ENCODE measurements at regions of chr1 and their contacts with region 1.

Region 1: GRCh38 chr1:65419681-65420589 is 533 bp upstream of the LEPR start:
- DNase-seq: peak; percentile 99
- ATAC-seq: peak; percentile 96
- H3K4me3 Mint-ChIP-seq: no peak overlapping the region
- H3K27ac Mint-ChIP-seq: peak overlapping the region; percentile 94
- H3K4me1 Mint-ChIP-seq: peaks cover 13% of the 10 kb centered on the region
- H3K27me3 Mint-ChIP-seq: no peaks in the 10 kb centered on the region

Region 2: DNA sequence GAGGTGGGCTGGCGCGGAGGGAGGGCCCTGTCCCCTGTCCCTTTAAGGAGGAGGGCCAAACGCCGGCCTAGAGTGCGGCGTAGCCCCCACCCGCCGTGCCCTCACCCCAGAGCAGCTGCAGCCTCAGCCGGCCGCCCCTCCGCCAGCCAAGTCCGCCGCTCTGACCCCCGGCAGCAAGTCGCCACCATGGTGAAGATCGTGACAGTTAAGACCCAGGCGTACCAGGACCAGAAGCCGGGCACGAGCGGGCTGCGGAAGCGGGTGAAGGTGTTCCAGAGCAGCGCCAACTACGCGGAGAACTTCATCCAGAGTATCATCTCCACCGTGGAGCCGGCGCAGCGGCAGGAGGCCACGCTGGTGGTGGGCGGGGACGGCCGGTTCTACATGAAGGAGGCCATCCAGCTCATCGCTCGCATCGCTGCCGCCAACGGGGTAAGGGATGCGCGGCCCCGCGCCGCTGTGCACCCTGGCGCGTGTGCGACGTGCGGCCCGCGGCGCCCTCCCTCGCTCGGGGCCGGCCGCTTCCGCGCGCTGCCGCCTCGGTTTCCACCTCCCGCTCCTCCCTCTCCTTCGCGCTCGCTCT is 1826.5 kb before region 1 on chr1 and contains the start of gene PGM1:
- CTCF ChIA-PET with region 1: no interaction called
- POLR2A ChIA-PET with region 1: no interaction called
- intact Hi-C with region 1: loop called in 1 of 2 experiments (anchors 5 kb)
- DNase-seq: peak; percentile 89
- ATAC-seq: peak; percentile 85
- H3K4me3 Mint-ChIP-seq: peak within 1 kb of the TSS; percentile 97
- H3K27ac Mint-ChIP-seq: peak within 1 kb of the TSS; percentile 96
- H3K4me1 Mint-ChIP-seq: peaks cover 27% of the 10 kb centered on the region
- H3K27me3 Mint-ChIP-seq: no peaks in the 10 kb centered on the region
- total RNA-seq, gene PGM1: 38.8 to 43.8 TPM

Region 3: DNA sequence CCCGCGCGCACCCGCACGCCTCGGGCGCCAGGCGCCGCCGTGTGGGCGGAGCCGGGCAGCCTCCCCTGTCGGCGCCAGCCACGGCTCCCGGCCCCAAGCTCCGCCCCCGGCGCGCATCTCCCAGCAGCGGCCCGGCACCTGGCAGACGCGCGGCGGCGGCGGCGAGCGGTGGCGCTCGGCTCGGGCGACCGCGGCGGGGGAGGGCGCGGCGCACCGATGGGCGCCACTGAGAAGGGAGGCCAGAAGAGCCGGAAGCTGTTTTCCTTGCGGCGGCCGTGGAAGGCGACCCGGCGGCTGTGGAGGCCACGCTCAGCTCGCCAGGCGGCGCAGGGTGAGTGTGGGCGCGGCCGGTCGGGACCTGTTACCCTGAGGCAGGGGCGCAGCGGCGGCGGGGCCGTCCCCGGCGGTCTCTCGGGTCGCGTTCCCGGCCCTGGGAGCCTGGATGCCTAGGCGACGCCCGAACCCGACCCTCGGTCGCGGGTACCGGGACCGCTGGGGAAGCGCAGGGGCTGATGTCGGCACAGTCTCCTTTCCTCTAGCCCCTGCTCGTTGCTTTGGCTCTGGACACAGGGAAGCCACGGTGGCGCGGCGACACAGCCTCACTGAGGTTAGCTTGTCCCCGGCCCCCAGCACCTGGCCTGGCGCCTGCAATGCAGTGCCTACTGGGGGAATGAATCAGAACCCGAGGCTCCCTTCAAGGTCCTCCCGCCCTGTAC is 165.5 kb before region 1 on chr1:
- CTCF ChIA-PET with region 1: interaction called, 3 read pairs
- POLR2A ChIA-PET with region 1: interaction called, 3 read pairs
- intact Hi-C with region 1: loop called (anchors 1 to 2 kb)
- DNase-seq: peak; percentile 93
- ATAC-seq: peak; percentile 96
- H3K4me3 Mint-ChIP-seq: peak overlapping the region; percentile 71
- H3K27ac Mint-ChIP-seq: peak overlapping the region; percentile 39
- H3K4me1 Mint-ChIP-seq: peaks cover 16% of the 10 kb centered on the region
- H3K27me3 Mint-ChIP-seq: peaks cover 16% of the 10 kb centered on the region

Region 4: GRCh38 chr1:65265651-65266351 is 154.1 kb before region 1 on chr1:
- CTCF ChIA-PET with region 1: no interaction called
- POLR2A ChIA-PET with region 1: no interaction called
- intact Hi-C with region 1: loop called in 1 of 2 experiments (anchors 1 kb)
- DNase-seq: peak; percentile 49
- ATAC-seq: peak; percentile 31
- H3K4me3 Mint-ChIP-seq: peak overlapping the region; percentile 55
- H3K27ac Mint-ChIP-seq: peak overlapping the region; percentile 51
- H3K4me1 Mint-ChIP-seq: peaks cover 23% of the 10 kb centered on the region
- H3K27me3 Mint-ChIP-seq: peaks cover 27% of the 10 kb centered on the region

Region 5: DNA sequence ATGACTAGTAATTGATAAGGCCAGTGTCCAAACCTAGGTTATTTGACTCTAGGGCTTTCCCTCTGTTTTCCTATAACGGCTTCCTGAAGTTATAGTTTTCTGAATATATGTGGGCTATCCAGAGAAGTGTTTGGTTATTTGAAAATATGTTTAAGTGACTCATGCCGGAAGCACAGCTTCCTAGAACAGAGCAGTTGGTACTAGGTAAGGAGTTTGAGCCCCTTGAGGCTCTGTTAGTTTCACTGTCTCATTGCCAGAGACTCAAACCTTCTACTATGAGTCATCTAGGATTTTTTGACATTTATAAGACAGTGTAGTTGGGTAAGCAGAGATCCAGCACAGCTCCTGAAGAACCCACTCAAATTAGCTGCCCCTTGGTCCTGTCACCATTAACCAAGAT is 26.6 kb before region 1 on chr1:
- CTCF ChIA-PET with region 1: no interaction called
- POLR2A ChIA-PET with region 1: no interaction called
- intact Hi-C with region 1: loop called (anchors 1 kb)
- DNase-seq: peak; percentile 45
- ATAC-seq: peak; percentile 87
- H3K4me3 Mint-ChIP-seq: no peak overlapping the region
- H3K27ac Mint-ChIP-seq: peak overlapping the region; percentile 28
- H3K4me1 Mint-ChIP-seq: peaks cover 57% of the 10 kb centered on the region
- H3K27me3 Mint-ChIP-seq: no peaks in the 10 kb centered on the region

Region 6: DNA sequence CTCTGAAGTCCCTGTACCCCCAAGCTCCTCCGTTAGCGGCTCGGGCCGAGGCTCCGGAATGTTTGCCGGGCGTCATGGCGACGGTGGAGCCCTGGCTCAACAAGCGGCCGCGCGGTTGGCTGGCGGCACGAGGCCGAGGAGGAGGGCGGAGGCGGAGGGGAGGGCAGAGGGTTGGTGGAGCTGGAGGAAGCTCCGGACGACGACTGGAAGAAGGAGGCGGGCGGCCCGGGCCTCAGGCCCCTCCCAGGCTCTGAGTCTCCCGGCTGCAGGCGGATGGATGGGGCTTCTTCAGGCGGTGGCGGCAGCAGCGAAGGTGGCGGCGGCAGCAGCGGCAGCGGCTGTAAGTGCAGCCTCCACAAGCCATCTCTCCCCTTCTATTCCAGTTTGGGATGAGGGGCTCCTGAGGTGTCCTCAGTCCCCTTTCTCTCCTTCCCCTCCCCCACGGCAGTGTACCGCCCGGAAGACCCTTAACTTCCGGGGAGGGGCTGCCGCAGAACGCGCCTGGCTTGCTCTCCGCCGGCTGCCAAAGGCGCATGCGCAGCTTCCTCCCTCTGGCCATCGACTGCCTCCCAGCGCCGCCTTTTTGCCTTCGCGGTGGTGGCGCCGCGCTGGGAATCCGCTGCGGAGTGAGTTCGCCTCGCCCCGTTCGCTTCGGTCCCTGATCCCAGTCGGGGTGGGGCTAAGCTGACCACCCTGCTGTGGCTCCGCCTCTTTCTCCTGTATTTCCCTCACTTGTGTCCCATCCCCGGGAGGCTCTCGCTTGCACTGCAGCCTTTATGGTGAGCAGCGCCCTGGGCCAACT is 1505.0 kb after region 1 on chr1 and contains the starts of genes DNAI4 and MIER1:
- CTCF ChIA-PET with region 1: no interaction called
- POLR2A ChIA-PET with region 1: no interaction called
- intact Hi-C with region 1: loop called in 1 of 2 experiments (anchors 2 kb)
- DNase-seq: peak; percentile 99
- ATAC-seq: peak; percentile 94
- H3K4me3 Mint-ChIP-seq: peak within 1 kb of the TSS; percentile 93
- H3K27ac Mint-ChIP-seq: peak within 1 kb of the TSS; percentile 92
- H3K4me1 Mint-ChIP-seq: peaks cover 52% of the 10 kb centered on the region
- H3K27me3 Mint-ChIP-seq: no peaks in the 10 kb centered on the region
- total RNA-seq, gene DNAI4: 0.87 to 3.6 TPM
- total RNA-seq, gene MIER1: 49.7 to 51.5 TPM

Measured in activated CD4-positive, alpha-beta T cell treated with anti-CD3 and anti-CD28 coated beads for 36 hours (primary cell).